Caco-2 (cell line): ENCODE measurements at regions of chr13 and their contacts with region 1.

Region 1: GRCh38 chr13:25980255-25980654 is 71.6 kb downstream of the SHISA2 start:
- DNase-seq: peak in 1 of 2 experiments; percentile 44
- H3K4me3 ChIP-seq: no peak overlapping the region
- H3K4me3 Mint-ChIP-seq: no peak overlapping the region
- H3K27ac Mint-ChIP-seq: peak overlapping the region; percentile 88
- H3K4me1 ChIP-seq: peaks cover 23% of the 10 kb centered on the region
- H3K4me1 Mint-ChIP-seq: peaks cover 35% of the 10 kb centered on the region
- H3K27me3 ChIP-seq: no peaks in the 10 kb centered on the region
- H3K27me3 Mint-ChIP-seq: no peaks in the 10 kb centered on the region
- CTCF ChIP-seq: peak; percentile 43 to 51

Region 2: GRCh38 chr13:25561812-25562211 is 418.4 kb before region 1 on chr13:
- CTCF ChIA-PET with region 1: no interaction called
- POLR2A ChIA-PET with region 1: no interaction called
- intact Hi-C with region 1: no loop called
- DNase-seq: no peak
- H3K4me3 ChIP-seq: no peak overlapping the region
- H3K4me3 Mint-ChIP-seq: no peak overlapping the region
- H3K27ac Mint-ChIP-seq: no peak overlapping the region
- H3K4me1 ChIP-seq: no peaks in the 10 kb centered on the region
- H3K4me1 Mint-ChIP-seq: no peaks in the 10 kb centered on the region
- H3K27me3 ChIP-seq: no peaks in the 10 kb centered on the region
- H3K27me3 Mint-ChIP-seq: peaks cover 29% of the 10 kb centered on the region
- CTCF ChIP-seq: no peak

Region 3: DNA sequence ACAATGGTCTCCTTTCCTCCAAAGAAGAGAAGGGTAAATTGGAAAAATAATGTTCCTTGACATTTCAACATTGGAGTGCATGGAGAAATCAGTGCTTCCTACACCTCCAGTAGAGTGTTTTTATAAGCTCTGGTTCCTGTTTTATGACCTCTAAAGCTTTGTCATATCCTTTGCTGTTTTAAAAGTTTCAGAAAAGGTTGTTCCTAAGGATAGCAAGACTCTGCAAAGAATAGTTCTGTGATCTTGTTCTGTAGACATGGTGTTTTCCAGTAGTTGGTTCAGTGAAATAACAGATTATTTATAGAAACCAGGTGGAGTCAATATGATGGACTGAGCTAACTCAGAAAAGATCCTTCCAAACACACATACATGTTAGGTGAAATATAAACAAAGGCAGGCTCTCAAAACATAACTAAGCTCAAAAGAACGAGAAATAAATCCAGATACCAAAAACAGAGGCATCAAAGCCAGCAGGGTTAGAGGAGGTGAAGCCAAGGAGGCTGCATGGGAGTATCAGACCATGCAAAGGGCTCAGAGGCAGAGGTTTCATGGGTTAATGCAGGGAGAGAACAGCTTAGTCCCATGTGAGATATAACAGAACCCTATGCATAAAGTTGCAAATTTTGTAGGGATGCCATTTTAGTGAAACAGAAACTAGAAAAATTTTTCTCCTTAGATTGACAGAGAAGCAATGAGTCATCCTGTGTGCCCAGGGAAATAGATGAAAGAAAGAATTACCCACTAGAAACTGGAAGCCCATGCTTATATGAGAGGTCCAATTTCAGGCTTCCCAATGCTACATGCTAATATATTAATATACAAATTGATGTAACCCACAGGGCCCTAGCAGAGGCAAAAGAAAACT is 27.2 kb after region 1 on chr13:
- CTCF ChIA-PET with region 1: no interaction called
- POLR2A ChIA-PET with region 1: no interaction called
- intact Hi-C with region 1: loop called (anchors 2 kb)
- DNase-seq: no peak
- H3K4me3 ChIP-seq: no peak overlapping the region
- H3K4me3 Mint-ChIP-seq: no peak overlapping the region
- H3K27ac Mint-ChIP-seq: no peak overlapping the region
- H3K4me1 ChIP-seq: no peaks in the 10 kb centered on the region
- H3K4me1 Mint-ChIP-seq: no peaks in the 10 kb centered on the region
- H3K27me3 ChIP-seq: no peaks in the 10 kb centered on the region
- H3K27me3 Mint-ChIP-seq: peaks cover 4% of the 10 kb centered on the region
- CTCF ChIP-seq: no peak